ENCODE measurements at regions of chr2 and their contacts with region 1.

Region 1: DNA sequence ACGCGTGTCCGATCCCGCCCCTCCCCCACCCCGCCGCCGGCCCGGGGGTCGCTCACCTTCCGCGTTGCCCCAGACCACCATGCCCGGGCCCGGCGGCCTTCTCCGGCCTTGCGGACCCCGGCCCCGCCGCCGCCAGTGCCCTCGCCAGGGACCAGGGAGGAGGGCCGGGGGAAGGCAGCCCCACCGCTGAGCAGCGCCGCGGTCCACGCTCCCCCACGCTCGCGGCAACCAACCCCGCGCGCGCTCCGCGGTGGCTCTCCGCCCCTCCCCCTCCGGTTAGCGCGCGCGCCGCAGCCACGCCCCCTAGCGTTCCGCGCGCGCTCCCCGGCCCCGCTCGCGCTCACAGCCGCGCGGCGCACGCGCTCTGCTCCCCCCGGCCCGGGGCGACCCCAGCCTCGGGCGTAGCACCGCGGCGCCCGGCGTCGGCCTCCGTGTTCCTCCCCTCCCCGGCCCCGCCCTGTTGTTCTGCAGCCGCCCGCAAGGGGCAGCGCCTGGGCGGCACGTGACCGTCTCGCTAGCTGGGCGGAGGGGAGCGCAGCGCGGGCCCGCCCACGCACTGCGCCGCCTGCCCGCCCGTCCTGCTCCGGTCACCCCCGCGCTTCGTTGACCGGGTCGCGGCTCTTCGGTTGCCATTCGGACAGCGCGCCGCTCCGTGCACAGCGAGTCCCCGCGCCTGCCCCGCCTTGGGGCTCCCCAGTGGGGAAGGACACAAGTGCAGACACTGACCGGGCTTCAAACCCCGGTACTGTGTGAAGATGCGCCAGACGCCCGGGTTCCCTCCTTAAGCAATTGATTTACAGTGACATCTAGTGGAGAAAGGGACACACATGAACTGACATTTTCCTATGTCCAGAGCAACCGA is at the start of gene REV1:
- DNase-seq: peak; percentile 93
- ATAC-seq: peak; percentile 94
- H3K4me3 ChIP-seq: peak within 1 kb of the TSS; percentile 99
- H3K27ac ChIP-seq: peak within 1 kb of the TSS; percentile 96
- H3K4me1 ChIP-seq: 0 out of 2 replicates have a peak, but pooled peaks cover 4% of the 10 kb centered on the region
- H3K27me3 ChIP-seq: peaks cover 11% of the 10 kb centered on the region
- CTCF ChIP-seq: peak; percentile 76
- POLR2A ChIP-seq: no peak
- RAD21 ChIP-seq: peak; percentile 82
- total RNA-seq, gene REV1: 25.8 and 30.1 TPM in 2 replicates

Region 2: DNA sequence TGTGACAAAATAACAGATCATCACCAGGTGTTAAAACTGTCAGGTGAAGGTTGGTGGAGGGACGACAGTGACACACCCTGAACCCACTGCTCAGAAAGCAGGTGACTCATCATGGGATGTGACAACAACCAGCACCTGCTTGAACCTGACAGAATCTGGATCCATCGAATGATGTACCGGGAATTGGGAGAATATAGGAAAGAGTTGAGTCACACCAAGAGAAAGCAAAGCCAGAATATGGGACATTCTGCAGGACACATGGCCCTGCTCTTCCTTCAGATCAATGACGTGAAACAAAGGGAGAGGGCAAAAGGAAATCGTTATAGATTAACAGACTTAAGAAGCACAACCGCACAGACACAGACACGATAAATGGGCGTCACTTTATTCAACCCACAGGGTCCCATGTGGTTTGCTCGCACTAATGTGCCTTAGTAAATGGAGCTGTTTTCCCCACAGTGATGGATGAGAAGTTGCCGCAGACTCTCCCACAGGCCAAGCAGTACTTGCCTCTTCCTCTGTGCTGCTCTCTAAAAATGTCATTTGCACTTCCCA is 654.1 kb before region 1 on chr2:
- CTCF ChIA-PET with region 1: no interaction called
- POLR2A ChIA-PET with region 1: no interaction called
- dilution Hi-C with region 1: no loop called
- in situ Hi-C with region 1: no loop called
- intact Hi-C with region 1: loop called (anchors 10 kb)
- DNase-seq: no peak
- ATAC-seq: no peak
- H3K4me3 ChIP-seq: no peak overlapping the region
- H3K27ac ChIP-seq: no peak overlapping the region
- H3K4me1 ChIP-seq: no peaks in the 10 kb centered on the region
- H3K27me3 ChIP-seq: peaks cover 16% of the 10 kb centered on the region
- CTCF ChIP-seq: no peak
- POLR2A ChIP-seq: no peak
- RAD21 ChIP-seq: no peak

Region 3: GRCh38 chr2:99154643-99155536 is 335.1 kb before region 1 on chr2 and contains the starts of genes LIPT1 and TSGA10:
- CTCF ChIA-PET with region 1: no interaction called
- POLR2A ChIA-PET with region 1: no interaction called
- dilution Hi-C with region 1: no loop called
- in situ Hi-C with region 1: no loop called
- intact Hi-C with region 1: loop called (anchors 2 kb)
- DNase-seq: peak; percentile 92
- ATAC-seq: peak; percentile 100
- H3K4me3 ChIP-seq: peak within 1 kb of the TSS; percentile 79
- H3K27ac ChIP-seq: peak within 1 kb of the TSS; percentile 72
- H3K4me1 ChIP-seq: peaks cover 5% of the 10 kb centered on the region
- H3K27me3 ChIP-seq: no peaks in the 10 kb centered on the region
- CTCF ChIP-seq: peak; percentile 7; the same call in 1 of the 2 replicates
- POLR2A ChIP-seq: peak; percentile 54
- RAD21 ChIP-seq: no peak
- total RNA-seq, gene LIPT1: 3.2 and 4.2 TPM in 2 replicates
- total RNA-seq, gene TSGA10: 0.54 and 1.1 TPM in 2 replicates

Region 4: DNA sequence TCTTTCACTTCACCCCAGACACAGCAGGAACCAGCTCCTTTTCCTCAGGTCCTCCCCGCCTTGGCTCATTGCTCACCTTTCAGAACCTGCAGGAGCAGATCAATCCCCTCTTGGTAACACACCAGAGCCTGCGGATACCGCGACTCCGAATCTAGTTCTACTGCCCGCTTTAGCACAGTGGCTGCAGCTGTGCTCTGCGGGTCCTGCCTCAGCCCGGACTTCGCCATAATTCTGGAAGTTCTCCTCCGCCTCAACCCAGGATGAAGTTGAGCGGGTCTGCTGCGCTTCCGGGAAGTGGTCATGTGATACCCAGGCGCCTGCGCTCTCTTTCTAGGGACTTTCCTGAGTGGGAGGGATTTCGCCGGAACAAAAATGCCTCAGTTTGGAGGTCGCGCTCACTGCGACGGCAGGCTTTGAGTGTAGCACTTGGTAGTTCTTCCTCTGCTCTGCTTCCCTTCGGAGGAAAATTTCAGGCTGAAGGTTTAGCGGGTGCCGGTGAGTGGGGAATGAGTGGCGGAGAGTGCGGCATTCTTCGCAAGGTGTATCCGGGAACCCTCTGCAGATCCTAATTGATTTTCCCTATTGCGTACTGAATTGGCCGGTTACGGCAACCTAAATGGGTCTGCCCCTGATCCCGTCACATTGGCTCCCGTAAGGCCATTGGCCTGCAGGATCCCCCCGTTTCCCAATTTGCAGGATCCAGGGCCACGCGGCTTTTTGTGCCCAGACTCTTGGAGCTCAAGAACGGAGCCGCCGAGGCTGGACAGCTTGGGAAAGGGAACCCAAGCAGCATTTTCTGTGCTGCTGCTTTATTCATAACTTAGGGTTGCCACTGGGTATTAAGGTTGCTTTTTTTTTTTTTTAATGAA is 309.0 kb before region 1 on chr2 and contains the starts of genes MITD1 and MRPL30:
- CTCF ChIA-PET with region 1: no interaction called
- POLR2A ChIA-PET with region 1: no interaction called
- dilution Hi-C with region 1: no loop called
- in situ Hi-C with region 1: no loop called
- intact Hi-C with region 1: loop called (anchors 1 kb)
- DNase-seq: peak; percentile 96
- ATAC-seq: peak; percentile 97
- H3K4me3 ChIP-seq: peak within 1 kb of the TSS; percentile 75
- H3K27ac ChIP-seq: peak within 1 kb of the TSS; percentile 77
- H3K4me1 ChIP-seq: no peaks in the 10 kb centered on the region; the same call in 1 of the 2 replicates
- H3K27me3 ChIP-seq: no peaks in the 10 kb centered on the region
- CTCF ChIP-seq: no peak
- POLR2A ChIP-seq: peak; percentile 95
- RAD21 ChIP-seq: 0 out of 2 replicates have a peak, but pooled peaks have one; percentile 10
- total RNA-seq, gene MITD1: 4.3 and 19.4 TPM in 2 replicates
- total RNA-seq, gene MRPL30: 34.8 and 39.2 TPM in 2 replicates

Region 5: DNA sequence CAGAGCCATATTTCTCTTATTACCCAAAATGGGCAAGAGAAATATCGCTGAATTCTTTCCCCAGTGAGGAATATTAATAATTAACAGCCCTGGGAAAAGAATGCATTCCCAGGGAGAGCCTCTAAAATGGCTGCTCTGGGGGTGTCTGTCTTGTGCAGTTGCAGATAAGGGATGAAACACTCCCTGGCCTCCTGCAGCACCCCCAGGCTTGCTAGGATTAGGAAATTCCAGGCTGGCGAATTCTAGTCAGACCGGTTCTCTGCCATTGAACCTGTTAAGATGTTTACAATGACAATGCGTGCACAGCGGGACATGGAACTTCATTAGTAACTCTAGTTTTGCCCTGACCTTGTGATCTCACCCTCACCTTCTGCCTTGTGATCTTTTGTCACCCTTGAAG is 284.5 kb before region 1 on chr2:
- CTCF ChIA-PET with region 1: no interaction called
- POLR2A ChIA-PET with region 1: no interaction called
- dilution Hi-C with region 1: no loop called
- in situ Hi-C with region 1: no loop called
- intact Hi-C with region 1: no loop called
- DNase-seq: no peak
- ATAC-seq: no peak
- H3K4me3 ChIP-seq: no peak overlapping the region
- H3K27ac ChIP-seq: no peak overlapping the region
- H3K4me1 ChIP-seq: no peaks in the 10 kb centered on the region
- H3K27me3 ChIP-seq: no peaks in the 10 kb centered on the region
- CTCF ChIP-seq: no peak
- POLR2A ChIP-seq: no peak
- RAD21 ChIP-seq: no peak

Region 6: GRCh38 chr2:99337113-99338028 is 152.6 kb before region 1 on chr2 and contains the start of gene EIF5B:
- CTCF ChIA-PET with region 1: interaction called, 4 read pairs
- POLR2A ChIA-PET with region 1: no interaction called
- dilution Hi-C with region 1: no loop called
- in situ Hi-C with region 1: no loop called
- intact Hi-C with region 1: loop called (anchors 1 kb)
- DNase-seq: peak; percentile 95
- ATAC-seq: peak; percentile 86
- H3K4me3 ChIP-seq: peak within 1 kb of the TSS; percentile 69
- H3K27ac ChIP-seq: peak within 1 kb of the TSS; percentile 75
- H3K4me1 ChIP-seq: no peaks in the 10 kb centered on the region
- H3K27me3 ChIP-seq: no peaks in the 10 kb centered on the region
- CTCF ChIP-seq: peak; percentile 73
- POLR2A ChIP-seq: peak; percentile 40; the same call in 1 of the 2 replicates
- RAD21 ChIP-seq: peak; percentile 37
- total RNA-seq, gene EIF5B: 19.7 and 26.9 TPM in 2 replicates

Region 7: DNA sequence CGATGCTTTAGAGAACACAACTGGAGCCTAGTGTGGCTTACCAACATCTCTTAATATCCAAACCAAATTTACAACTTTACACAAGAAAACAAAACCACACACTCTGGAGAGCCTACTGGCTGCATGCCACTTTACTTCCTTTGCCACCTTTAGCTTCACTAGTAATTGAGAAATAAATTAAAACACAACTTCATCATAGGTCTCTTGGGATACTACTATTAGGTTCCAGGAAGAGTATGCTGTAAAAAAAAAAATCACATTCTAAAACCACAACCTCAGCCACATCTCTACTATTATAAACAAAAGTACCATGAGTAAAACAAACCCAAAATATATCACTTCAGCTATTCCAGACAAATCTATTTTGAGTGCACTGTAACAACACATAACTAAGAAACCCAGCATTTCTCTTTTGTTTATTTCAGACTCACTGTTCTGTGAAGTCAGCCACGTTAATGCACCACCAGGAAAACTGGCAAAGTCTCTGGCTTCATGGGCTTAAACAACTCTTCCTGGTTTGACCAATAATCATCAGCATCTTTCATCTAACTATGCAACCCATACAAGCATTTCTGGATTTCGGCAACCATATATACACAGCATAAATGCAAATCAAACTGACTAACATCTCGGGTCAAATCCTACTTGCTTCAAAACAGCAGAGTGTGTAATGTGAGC is 59.2 kb before region 1 on chr2:
- CTCF ChIA-PET with region 1: no interaction called
- POLR2A ChIA-PET with region 1: no interaction called
- dilution Hi-C with region 1: no loop called
- in situ Hi-C with region 1: no loop called
- intact Hi-C with region 1: loop called (anchors 1 kb)
- DNase-seq: peak; percentile 89
- ATAC-seq: peak; percentile 94
- H3K4me3 ChIP-seq: no peak overlapping the region
- H3K27ac ChIP-seq: no peak overlapping the region
- H3K4me1 ChIP-seq: peaks cover 7% of the 10 kb centered on the region
- H3K27me3 ChIP-seq: no peaks in the 10 kb centered on the region
- CTCF ChIP-seq: no peak
- POLR2A ChIP-seq: no peak
- RAD21 ChIP-seq: no peak

Region 8: DNA sequence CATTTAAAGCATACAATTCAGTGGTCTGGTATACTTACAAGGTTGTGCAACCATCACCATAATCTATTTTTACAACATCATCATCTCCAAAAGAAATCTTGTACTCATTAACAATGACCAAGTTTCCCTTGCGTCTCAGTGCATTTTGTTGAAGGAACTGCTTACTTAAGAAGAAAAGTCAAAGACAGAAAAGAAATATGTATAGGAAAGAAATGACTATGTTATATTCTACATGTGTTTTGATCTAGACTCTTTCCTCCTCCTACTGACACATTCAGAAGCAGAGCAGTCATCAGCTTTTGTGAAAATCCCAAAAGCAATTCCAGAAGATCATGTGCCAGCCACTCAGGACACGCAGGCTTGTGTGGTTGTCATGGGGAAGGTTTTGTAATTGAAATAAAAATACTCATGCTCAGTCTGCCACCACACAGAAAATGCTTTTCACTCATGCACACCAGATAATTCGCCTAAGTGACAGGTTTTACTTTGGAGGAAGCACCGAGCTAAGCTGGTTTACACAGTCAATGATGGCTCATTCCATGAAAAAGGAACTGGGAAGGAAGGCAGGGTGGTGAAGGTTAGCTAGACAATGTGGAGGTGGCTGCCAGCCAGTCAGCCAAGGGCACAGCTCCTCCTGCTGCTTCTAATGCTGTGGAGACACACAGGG is 158.3 kb after region 1 on chr2:
- CTCF ChIA-PET with region 1: no interaction called
- POLR2A ChIA-PET with region 1: no interaction called
- dilution Hi-C with region 1: no loop called
- in situ Hi-C with region 1: no loop called
- intact Hi-C with region 1: no loop called
- DNase-seq: peak; percentile 86
- ATAC-seq: peak; percentile 53
- H3K4me3 ChIP-seq: no peak overlapping the region
- H3K27ac ChIP-seq: peak overlapping the region; percentile 96
- H3K4me1 ChIP-seq: peaks cover 26% of the 10 kb centered on the region
- H3K27me3 ChIP-seq: no peaks in the 10 kb centered on the region
- CTCF ChIP-seq: no peak
- POLR2A ChIP-seq: no peak
- RAD21 ChIP-seq: no peak

Region 9: GRCh38 chr2:100197631-100198153 is 707.7 kb after region 1 on chr2:
- CTCF ChIA-PET with region 1: no interaction called
- POLR2A ChIA-PET with region 1: no interaction called
- dilution Hi-C with region 1: no loop called
- in situ Hi-C with region 1: no loop called
- intact Hi-C with region 1: no loop called
- DNase-seq: peak; percentile 46
- ATAC-seq: peak; percentile 92
- H3K4me3 ChIP-seq: no peak overlapping the region
- H3K27ac ChIP-seq: peak overlapping the region; percentile 61
- H3K4me1 ChIP-seq: peaks cover 18% of the 10 kb centered on the region
- H3K27me3 ChIP-seq: no peaks in the 10 kb centered on the region
- CTCF ChIP-seq: no peak
- POLR2A ChIP-seq: no peak
- RAD21 ChIP-seq: no peak

Measured in IMR-90 (cell line).